ENCODE measurements at regions of chr10 and their contacts with region 1.

Region 1: GRCh38 chr10:101067356-101068083 is 5.7 kb downstream of the KAZALD1 start:
- DNase-seq: peak; percentile 88
- ATAC-seq: peak; percentile 77
- H3K4me3 Mint-ChIP-seq: peak overlapping the region; percentile 74
- H3K27ac Mint-ChIP-seq: no peak overlapping the region
- H3K4me1 Mint-ChIP-seq: peaks cover 22% of the 10 kb centered on the region
- H3K27me3 Mint-ChIP-seq: peaks cover 52% of the 10 kb centered on the region
- CTCF ChIP-seq: peak; percentile 88

Region 2: DNA sequence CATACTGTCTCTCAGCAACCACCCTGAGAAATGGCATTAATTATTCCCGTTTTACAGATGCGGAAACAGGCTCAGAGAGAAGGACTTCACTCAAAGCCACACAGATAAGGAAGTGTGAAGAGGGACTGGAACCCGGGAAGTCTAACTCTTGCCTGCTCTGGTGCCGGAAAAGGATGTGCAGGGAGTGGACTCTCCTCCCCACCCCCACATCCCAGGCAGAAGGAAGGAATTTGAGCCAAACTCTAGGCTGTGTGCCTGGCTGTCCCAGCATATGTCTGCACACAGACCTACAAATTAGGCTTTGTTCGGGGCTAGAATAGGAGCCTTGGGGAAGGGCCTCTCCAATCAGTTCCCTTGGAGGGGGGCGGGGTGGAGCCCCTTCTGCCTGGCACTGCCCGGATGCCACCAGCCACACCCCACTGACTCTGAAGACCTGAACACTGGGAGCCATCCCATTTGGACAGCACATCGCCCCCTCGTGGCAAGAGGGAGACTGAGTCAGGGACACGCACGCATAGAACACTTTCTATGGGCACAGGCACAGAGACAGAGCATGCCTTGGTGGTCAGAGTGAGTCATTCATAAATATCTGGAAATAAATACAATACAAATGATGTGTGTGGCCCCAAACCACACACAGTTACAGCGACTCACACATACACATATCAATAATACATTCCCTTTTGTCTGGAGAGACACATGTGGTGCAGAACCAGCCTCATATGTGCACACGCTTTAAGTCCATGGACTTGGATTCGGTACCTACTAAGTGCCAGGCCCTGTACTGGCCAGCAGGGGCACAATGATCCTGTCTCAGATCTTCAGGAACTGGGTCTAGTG is 54.8 kb before region 1 on chr10:
- CTCF ChIA-PET with region 1: interaction called, 43 read pairs
- POLR2A ChIA-PET with region 1: no interaction called
- intact Hi-C with region 1: no loop called
- DNase-seq: peak; percentile 92
- ATAC-seq: peak; percentile 90
- H3K4me3 Mint-ChIP-seq: no peak overlapping the region
- H3K27ac Mint-ChIP-seq: no peak overlapping the region
- H3K4me1 Mint-ChIP-seq: peaks cover 24% of the 10 kb centered on the region
- H3K27me3 Mint-ChIP-seq: peaks cover 19% of the 10 kb centered on the region
- CTCF ChIP-seq: peak; percentile 97

Region 3: DNA sequence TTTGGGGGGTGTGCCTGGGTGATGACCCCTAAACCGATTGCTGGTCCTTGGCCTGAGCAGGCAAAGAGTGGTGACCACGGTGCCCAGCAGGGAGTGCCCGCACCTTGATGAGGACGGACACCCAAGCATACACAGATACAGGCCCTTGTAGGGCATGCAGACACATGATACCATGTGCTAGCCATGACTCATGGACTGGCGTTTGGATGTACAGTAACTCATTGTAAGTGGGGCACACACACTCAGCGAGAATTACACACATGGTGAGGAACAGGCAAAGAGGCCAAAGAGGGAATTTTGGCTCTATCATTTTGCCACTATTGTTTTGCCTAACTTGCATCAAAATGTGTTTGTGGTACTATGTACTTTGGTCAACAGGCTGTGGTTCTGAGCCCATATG is 18.3 kb after region 1 on chr10:
- CTCF ChIA-PET with region 1: interaction called, 10 read pairs
- POLR2A ChIA-PET with region 1: no interaction called
- intact Hi-C with region 1: no loop called
- DNase-seq: no peak
- ATAC-seq: no peak
- H3K4me3 Mint-ChIP-seq: no peak overlapping the region
- H3K27ac Mint-ChIP-seq: no peak overlapping the region
- H3K4me1 Mint-ChIP-seq: no peaks in the 10 kb centered on the region
- H3K27me3 Mint-ChIP-seq: peaks cover 47% of the 10 kb centered on the region
- CTCF ChIP-seq: no peak

Region 4: GRCh38 chr10:101244321-101245050 is 177.0 kb after region 1 on chr10:
- CTCF ChIA-PET with region 1: no interaction called
- POLR2A ChIA-PET with region 1: no interaction called
- intact Hi-C with region 1: no loop called
- DNase-seq: no peak
- ATAC-seq: no peak
- H3K4me3 Mint-ChIP-seq: no peak overlapping the region
- H3K27ac Mint-ChIP-seq: no peak overlapping the region
- H3K4me1 Mint-ChIP-seq: no peaks in the 10 kb centered on the region
- H3K27me3 Mint-ChIP-seq: peaks cover 49% of the 10 kb centered on the region
- CTCF ChIP-seq: no peak

Region 5: DNA sequence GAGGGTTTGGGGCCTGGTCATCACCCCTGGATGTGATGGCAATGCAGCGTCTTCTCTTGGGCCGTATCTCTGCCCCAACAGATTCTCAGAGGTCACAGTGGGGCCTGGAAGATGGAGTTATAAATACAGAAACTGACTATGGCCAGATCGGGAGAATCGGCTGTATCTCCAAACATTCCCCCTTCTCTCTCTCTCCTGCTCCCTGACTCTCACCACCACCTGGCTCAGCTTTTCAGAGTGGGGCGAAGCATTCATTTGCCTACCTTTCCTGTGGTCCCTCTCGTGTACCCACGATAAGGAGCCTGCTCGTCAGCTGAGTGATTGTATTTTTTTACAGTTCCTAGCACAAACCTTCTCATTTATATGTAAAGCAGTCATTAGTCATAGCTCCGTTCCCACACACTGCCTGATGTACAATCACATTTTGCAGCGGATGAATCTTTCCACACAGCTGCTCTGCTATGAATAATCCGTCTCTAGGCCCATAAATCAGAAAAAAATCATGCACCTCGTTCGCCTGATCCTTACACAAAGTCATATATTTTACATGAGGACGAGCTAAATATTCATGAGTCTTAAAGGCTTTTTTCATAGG is 263.2 kb after region 1 on chr10:
- CTCF ChIA-PET with region 1: no interaction called
- POLR2A ChIA-PET with region 1: no interaction called
- intact Hi-C with region 1: no loop called
- DNase-seq: no peak
- ATAC-seq: no peak
- H3K4me3 Mint-ChIP-seq: no peak overlapping the region
- H3K27ac Mint-ChIP-seq: no peak overlapping the region
- H3K4me1 Mint-ChIP-seq: no peaks in the 10 kb centered on the region
- H3K27me3 Mint-ChIP-seq: peaks cover 9% of the 10 kb centered on the region
- CTCF ChIP-seq: no peak